Common myeloid progenitor, CD34-positive (primary cell): ENCODE measurements at regions of chr18 and their contacts with region 1.

Region 1: DNA sequence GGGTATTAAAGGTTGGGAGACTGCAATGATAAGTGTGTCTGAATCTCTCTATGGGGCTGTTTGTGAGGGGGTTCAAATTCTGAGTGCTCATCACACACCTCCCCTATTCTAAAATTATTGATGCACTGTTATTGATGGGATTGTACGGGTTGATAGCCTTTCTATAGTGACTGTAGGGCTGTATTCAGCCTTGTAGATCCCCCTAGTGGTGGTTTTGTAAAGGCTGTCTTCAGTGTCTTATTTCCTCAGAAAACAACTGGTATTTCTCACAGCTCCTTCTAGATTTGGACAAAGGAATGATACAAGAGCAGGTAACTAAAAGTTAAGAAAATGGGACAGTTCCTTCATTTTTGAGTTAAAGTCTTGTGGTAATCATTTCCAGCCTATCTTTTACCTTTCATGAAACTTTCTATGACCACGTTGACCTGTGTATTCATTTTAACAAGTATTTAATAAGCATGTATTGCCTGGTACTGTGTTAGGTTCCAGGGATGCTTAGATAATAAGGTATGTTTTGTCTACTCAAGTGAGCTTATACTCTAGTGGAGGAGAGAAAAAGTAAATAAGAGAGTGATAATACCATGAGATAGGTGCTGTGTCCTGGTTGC is 21.2 kb downstream of the SMAD4 start:
- DNase-seq: peak; percentile 59 to 74 (median 71)
- H3K4me3 ChIP-seq: no peak overlapping the region
- H3K27ac ChIP-seq: no peak overlapping the region
- H3K4me1 ChIP-seq: peaks cover 0 to 7% (median 4%) of the 10 kb centered on the region in 4 experiments
- H3K27me3 ChIP-seq: no peaks in the 10 kb centered on the region

Region 2: GRCh38 chr18:50819728-50820378 is 231.4 kb before region 1 on chr18 and contains the start of gene MRO:
- CTCF ChIA-PET with region 1: interaction called, 18 read pairs
- POLR2A ChIA-PET with region 1: no interaction called
- DNase-seq: peak; percentile 75 to 88 (median 86)
- H3K4me3 ChIP-seq: peak within 1 kb of the TSS in 6 of 7 experiments; percentile 48 to 78 (median 66)
- H3K27ac ChIP-seq: no peak within 1 kb of the TSS
- H3K4me1 ChIP-seq: peaks cover 9 to 19% (median 15%) of the 10 kb centered on the region in 4 experiments
- H3K27me3 ChIP-seq: peaks cover 0 to 5% (median 2%) of the 10 kb centered on the region in 5 experiments

Region 3: DNA sequence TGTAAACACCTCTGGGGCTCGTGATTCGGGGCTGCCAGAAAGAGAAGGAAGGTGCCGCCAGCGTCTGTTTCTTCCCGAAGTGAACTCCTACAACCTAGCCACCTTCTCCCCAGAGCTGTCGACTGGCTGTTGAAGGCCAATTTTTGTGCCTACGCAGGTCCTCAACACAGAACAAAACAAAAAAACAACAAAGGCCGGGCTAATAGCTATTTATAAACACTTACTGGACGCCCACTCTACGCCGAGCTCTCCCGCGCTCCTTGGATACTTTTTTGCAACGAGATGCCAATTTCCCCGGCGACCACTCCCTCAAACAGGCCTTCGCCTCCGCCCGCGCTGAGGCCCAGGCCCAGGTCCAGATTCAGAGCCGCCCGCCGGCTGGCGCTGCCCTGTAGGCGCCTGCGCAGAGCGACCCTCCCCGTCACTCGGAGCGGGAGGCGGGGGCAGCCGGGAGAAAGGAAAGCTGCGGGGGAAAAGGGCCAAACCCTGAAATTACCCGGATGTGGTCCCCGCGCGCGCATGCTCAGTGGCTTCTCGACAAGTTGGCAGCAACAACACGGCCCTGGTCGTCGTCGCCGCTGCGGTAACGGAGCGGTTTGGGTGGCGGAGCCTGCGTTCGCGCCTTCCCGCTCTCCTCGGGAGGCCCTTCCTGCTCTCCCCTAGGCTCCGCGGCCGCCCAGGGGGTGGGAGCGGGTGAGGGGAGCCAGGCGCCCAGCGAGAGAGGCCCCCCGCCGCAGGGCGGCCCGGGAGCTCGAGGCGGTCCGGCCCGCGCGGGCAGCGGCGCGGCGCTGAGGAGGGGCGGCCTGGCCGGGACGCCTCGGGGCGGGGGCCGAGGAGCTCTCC is 21.3 kb before region 1 on chr18 and contains the start of gene SMAD4:
- CTCF ChIA-PET with region 1: interaction called, 15 read pairs
- POLR2A ChIA-PET with region 1: interaction called, 5 read pairs
- DNase-seq: peak; percentile 96 to 98 (median 97)
- H3K4me3 ChIP-seq: peak within 1 kb of the TSS; percentile 72 to 94 (median 84)
- H3K27ac ChIP-seq: peak within 1 kb of the TSS; percentile 91 to 95
- H3K4me1 ChIP-seq: peaks cover 18 to 45% (median 32%) of the 10 kb centered on the region in 4 experiments
- H3K27me3 ChIP-seq: no peaks in the 10 kb centered on the region

Region 4: DNA sequence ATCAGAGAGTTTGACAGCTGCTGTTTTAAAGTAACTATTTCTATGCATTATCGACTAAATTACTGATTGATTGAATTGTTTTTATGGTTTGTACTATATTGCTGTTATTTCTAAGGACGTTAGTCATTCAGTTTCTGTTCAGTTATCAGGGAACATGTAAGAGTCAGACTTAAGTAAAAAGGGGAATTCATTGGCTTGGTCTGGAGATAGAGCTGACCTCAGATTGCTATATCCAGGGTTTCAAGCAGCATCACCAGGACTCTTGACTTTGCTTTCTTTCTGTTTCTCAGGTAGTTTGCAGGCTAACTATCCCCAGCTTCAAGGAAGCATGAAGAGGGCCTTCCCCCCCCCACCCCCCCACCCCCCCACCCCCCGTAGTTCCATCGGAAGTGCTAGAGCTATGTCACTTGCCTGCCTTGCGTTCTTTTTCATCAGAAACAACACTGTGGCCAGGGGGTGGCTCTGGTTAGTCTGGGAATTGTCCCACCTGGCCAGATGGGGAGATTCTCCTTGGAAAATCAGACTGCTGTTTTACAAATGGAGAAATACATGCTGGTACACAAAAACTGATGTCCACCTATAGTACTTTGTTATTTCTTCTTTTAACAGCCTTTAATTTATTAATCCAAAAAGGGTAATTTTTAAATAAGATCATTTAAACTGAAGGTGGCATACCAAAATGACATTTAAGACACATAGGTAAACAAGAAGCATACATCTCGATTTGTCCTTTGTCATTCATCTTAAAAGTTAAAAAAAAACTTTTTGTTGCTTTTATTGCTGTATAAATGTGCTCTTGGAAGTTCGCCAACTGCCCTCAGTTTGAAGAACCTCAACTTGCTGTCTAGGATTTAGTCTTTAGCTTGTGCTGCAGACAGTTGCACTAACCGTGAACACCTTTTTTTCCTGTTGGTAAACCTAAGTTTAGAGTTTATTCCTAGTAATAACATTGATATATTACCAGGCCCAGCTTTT is 11.8 kb before region 1 on chr18:
- CTCF ChIA-PET with region 1: interaction called, 50 read pairs
- POLR2A ChIA-PET with region 1: interaction called, 3 read pairs
- DNase-seq: peak in 2 of 3 donors; percentile 54 to 61
- H3K4me3 ChIP-seq: no peak overlapping the region
- H3K27ac ChIP-seq: no peak overlapping the region
- H3K4me1 ChIP-seq: peaks cover 4 to 32% (median 10%) of the 10 kb centered on the region in 4 experiments
- H3K27me3 ChIP-seq: no peaks in the 10 kb centered on the region